ENCODE measurements at regions of chr20 and their contacts with region 1.

Region 1: DNA sequence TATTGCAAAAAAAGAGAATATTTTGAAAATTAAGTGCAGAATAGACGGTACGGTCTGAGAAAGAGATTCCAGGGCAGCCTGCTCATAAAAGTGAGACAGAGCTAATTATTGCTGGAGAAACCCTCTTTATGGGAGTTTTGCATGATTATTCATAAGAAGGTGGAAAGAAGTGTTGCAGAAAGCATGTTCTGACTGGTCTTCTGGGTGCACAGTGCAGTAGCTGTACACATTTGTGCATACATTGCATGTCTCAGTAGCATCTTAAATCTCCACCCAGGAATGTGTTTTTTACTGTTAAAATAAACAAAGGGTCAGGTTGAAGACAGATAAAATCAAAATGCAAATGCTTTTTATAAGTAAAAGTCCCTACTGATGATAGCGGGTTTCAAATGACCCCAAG is 1813.6 kb upstream of the DEFB115 start:
- DNase-seq: peak; percentile 48
- H3K4me3 Mint-ChIP-seq: no peak overlapping the region
- H3K27ac Mint-ChIP-seq: no peak overlapping the region
- H3K4me1 Mint-ChIP-seq: peaks cover 8% of the 10 kb centered on the region
- H3K27me3 Mint-ChIP-seq: no peaks in the 10 kb centered on the region

Region 2: GRCh38 chr20:29318871-29319461 is 124.9 kb before region 1 on chr20:
- CTCF ChIA-PET with region 1: no interaction called
- intact Hi-C with region 1: no loop called
- DNase-seq: no peak
- H3K4me3 Mint-ChIP-seq: no peak overlapping the region
- H3K27ac Mint-ChIP-seq: no peak overlapping the region
- H3K4me1 Mint-ChIP-seq: peaks cover 3% of the 10 kb centered on the region
- H3K27me3 Mint-ChIP-seq: peaks cover 14% of the 10 kb centered on the region

Region 3: GRCh38 chr20:29408034-29408695 is 35.7 kb before region 1 on chr20:
- CTCF ChIA-PET with region 1: no interaction called
- intact Hi-C with region 1: no loop called
- DNase-seq: no peak
- H3K4me3 Mint-ChIP-seq: peak overlapping the region; percentile 31
- H3K27ac Mint-ChIP-seq: no peak overlapping the region
- H3K4me1 Mint-ChIP-seq: peaks cover 20% of the 10 kb centered on the region
- H3K27me3 Mint-ChIP-seq: peaks cover 38% of the 10 kb centered on the region

Region 4: GRCh38 chr20:29497261-29497671 is 53.4 kb after region 1 on chr20:
- CTCF ChIA-PET with region 1: no interaction called
- intact Hi-C with region 1: loop called (anchors 2 kb)
- DNase-seq: peak; percentile 57
- H3K4me3 Mint-ChIP-seq: no peak overlapping the region
- H3K27ac Mint-ChIP-seq: peak overlapping the region; percentile 4
- H3K4me1 Mint-ChIP-seq: peaks cover 3% of the 10 kb centered on the region
- H3K27me3 Mint-ChIP-seq: no peaks in the 10 kb centered on the region

Region 5: DNA sequence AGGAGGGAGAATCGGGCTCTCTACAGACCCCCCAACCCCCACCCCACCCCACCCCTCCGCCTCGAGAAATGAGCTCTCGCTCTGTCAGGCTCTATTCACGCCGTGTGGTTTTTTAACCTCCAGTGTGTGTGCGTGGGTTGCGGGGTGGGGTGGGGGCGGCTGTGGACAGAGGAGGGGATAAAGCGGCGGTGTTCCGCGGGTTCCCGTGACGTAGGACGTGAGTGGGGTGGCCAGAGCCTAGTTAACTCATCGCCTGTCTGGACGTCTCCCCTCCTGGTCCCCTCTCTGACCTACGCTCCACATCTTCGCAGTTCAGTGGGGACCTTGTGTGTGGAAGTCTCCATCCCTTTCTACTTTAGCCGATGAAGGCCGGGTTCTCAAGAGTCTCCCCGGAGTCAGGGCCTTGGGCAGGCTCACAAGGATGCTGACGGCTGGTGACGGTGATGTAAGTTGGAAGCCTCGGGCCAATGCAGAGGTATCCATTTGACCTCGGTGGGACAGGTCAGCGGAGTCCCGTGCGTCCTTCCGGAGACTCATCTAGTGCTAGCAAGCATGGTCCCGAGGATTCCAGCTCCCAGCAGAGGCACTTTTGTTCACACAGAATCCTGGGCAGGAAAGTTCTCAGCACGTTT is 306.6 kb after region 1 on chr20:
- CTCF ChIA-PET with region 1: no interaction called
- intact Hi-C with region 1: loop called (anchors 5 kb)
- DNase-seq: no peak
- H3K4me3 Mint-ChIP-seq: no peak overlapping the region
- H3K27ac Mint-ChIP-seq: no peak overlapping the region
- H3K4me1 Mint-ChIP-seq: peaks cover 19% of the 10 kb centered on the region
- H3K27me3 Mint-ChIP-seq: peaks cover 7% of the 10 kb centered on the region

Region 6: DNA sequence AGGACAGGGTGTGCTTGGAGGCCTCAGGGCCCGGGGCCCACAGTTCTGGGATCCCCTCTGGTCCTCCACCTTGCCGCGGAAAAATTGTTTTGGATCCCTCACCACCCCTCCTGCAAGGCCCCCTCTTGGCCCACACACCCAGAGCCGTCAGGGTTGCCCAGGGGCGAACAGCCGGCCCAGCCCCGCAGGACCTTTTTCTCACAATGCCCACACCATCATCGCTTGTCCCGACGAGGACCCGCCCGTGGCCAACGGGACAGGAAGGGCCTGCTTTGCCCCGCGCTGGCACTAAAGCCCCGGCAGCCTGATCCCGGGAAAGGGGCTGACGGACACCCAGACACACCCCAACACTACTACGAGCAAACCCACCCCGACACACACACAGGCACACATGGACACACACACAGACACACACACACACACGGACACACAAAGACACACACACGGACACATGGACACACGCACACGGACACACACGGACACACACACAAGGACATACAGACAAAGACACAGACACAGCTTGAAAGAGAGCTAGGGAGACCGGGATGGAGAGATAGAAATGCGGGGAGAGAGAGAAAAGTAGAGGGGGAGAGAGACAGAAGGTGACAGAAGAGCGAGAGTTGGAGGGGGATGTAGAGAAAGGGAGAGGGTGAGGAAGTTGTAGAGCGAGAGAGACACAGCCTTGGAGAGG is 320.1 kb after region 1 on chr20:
- CTCF ChIA-PET with region 1: no interaction called
- intact Hi-C with region 1: loop called (anchors 1 kb)
- DNase-seq: no peak
- H3K4me3 Mint-ChIP-seq: no peak overlapping the region
- H3K27ac Mint-ChIP-seq: no peak overlapping the region
- H3K4me1 Mint-ChIP-seq: peaks cover 2% of the 10 kb centered on the region
- H3K27me3 Mint-ChIP-seq: peaks cover 14% of the 10 kb centered on the region